WTC11 (cell line): ENCODE measurements at regions of chr22 and their contacts with region 1.

Region 1: GRCh38 chr22:30634471-30635233 is 929 bp upstream of the SLC35E4 start:
- DNase-seq: peak; percentile 92
- ATAC-seq: peak; percentile 49
- H3K4me3 Mint-ChIP-seq: peak overlapping the region; percentile 65
- H3K27ac Mint-ChIP-seq: 0 out of 2 replicates have a peak overlapping the region, but pooled peaks have one; percentile 15
- H3K4me1 Mint-ChIP-seq: peaks cover 18% of the 10 kb centered on the region
- H3K27me3 Mint-ChIP-seq: 0 out of 2 replicates have a peak, but pooled peaks cover 7% of the 10 kb centered on the region
- CTCF ChIP-seq: peak; percentile 94

Region 2: GRCh38 chr22:30649430-30650007 is 14.9 kb after region 1 on chr22:
- CTCF ChIA-PET with region 1: interaction called, 35 read pairs
- POLR2A ChIA-PET with region 1: interaction called, 3 read pairs
- DNase-seq: no peak
- ATAC-seq: peak; percentile 46; the same call in 1 of the 2 replicates
- H3K4me3 Mint-ChIP-seq: no peak overlapping the region
- H3K27ac Mint-ChIP-seq: no peak overlapping the region
- H3K4me1 Mint-ChIP-seq: peaks cover 11% of the 10 kb centered on the region
- H3K27me3 Mint-ChIP-seq: peaks cover 4% of the 10 kb centered on the region
- CTCF ChIP-seq: no peak

Region 3: GRCh38 chr22:30667494-30668385 is 33.1 kb after region 1 on chr22 and contains the start of gene DUSP18:
- CTCF ChIA-PET with region 1: interaction called, 32 read pairs
- POLR2A ChIA-PET with region 1: no interaction called
- DNase-seq: peak; percentile 98
- ATAC-seq: peak; percentile 98
- H3K4me3 Mint-ChIP-seq: peak within 1 kb of the TSS; percentile 84
- H3K27ac Mint-ChIP-seq: peak within 1 kb of the TSS; percentile 52; the same call in 1 of the 2 replicates
- H3K4me1 Mint-ChIP-seq: peaks cover 12% of the 10 kb centered on the region
- H3K27me3 Mint-ChIP-seq: peaks cover 36% of the 10 kb centered on the region
- CTCF ChIP-seq: peak; percentile 37; the same call in 1 of the 2 replicates
- total RNA-seq, gene DUSP18: 4.2 to 4.4 TPM (median 4.3 TPM) in 3 replicates

Region 4: DNA sequence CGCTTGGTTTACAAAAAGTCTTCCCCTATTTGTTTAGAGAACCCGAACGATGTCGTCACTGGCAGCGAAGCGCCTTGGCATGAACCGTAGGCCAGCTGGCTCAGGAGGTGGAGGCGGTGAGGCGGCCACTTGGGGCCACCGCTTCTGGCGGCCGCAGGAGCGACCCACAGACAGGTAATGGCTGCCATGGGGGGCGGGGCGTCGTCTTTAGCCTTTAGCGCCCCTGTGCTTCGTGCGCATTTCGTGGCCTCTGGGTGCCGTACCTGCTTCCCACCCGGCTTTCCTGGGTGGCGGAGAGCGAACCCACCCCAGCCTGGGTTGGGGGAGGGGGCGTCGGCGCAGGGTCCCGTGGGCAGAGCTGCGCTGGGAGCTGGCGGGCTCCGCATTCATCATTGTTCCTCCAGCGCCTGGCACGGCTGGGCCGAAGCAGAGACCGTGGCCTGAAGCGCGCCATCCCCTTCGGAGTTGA is 59.6 kb after region 1 on chr22:
- CTCF ChIA-PET with region 1: interaction called, 25 read pairs
- POLR2A ChIA-PET with region 1: interaction called, 4 read pairs
- DNase-seq: peak; percentile 66
- ATAC-seq: peak; percentile 70
- H3K4me3 Mint-ChIP-seq: peak overlapping the region; percentile 79
- H3K27ac Mint-ChIP-seq: 0 out of 2 replicates have a peak overlapping the region, but pooled peaks have one; percentile 62
- H3K4me1 Mint-ChIP-seq: peaks cover 16% of the 10 kb centered on the region
- H3K27me3 Mint-ChIP-seq: peaks cover 27% of the 10 kb centered on the region
- CTCF ChIP-seq: no peak

Region 5: DNA sequence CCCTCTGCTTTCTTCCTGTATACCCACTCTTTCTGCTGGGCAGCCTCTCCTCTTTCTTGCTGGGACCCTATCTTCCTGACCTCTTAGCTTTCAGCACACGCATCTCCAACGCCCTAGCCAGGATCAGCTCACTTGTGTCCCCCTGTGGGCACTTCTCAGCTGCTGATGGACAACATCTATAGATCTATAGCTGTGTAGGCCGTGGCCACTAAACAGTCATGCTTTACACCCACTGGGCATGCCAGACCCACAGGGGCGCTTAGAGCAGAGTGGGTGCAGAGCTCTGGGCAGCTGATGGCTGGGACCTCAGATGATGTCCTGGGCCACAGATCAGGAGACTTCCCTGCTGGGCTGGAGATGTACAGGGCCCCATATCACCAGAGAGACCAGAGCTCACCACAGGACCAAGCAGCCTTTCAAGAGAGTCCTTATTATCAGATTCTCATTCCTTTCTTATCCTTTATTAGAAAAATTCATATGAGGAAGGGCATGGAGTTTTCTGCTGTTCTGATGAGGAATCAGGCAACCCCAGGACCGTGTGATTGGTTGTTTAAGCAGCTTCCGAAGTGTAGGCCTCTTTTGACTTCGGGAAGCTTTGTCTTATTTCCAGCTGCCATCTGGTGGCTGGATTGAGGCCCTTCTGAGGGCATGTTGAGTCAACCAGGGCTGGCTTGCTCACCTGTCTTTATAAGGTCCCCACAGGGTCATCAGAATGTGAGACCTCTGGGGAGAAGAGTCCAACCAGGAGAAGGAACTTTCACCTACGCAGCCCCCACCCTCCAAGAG is 120.5 kb after region 1 on chr22:
- CTCF ChIA-PET with region 1: interaction called, 166 read pairs
- POLR2A ChIA-PET with region 1: interaction called, 8 read pairs
- DNase-seq: peak; percentile 66
- ATAC-seq: peak; percentile 93
- H3K4me3 Mint-ChIP-seq: no peak overlapping the region
- H3K27ac Mint-ChIP-seq: no peak overlapping the region
- H3K4me1 Mint-ChIP-seq: peaks cover 11% of the 10 kb centered on the region
- H3K27me3 Mint-ChIP-seq: no peaks in the 10 kb centered on the region
- CTCF ChIP-seq: peak; percentile 32; the same call in 1 of the 2 replicates

Region 6: DNA sequence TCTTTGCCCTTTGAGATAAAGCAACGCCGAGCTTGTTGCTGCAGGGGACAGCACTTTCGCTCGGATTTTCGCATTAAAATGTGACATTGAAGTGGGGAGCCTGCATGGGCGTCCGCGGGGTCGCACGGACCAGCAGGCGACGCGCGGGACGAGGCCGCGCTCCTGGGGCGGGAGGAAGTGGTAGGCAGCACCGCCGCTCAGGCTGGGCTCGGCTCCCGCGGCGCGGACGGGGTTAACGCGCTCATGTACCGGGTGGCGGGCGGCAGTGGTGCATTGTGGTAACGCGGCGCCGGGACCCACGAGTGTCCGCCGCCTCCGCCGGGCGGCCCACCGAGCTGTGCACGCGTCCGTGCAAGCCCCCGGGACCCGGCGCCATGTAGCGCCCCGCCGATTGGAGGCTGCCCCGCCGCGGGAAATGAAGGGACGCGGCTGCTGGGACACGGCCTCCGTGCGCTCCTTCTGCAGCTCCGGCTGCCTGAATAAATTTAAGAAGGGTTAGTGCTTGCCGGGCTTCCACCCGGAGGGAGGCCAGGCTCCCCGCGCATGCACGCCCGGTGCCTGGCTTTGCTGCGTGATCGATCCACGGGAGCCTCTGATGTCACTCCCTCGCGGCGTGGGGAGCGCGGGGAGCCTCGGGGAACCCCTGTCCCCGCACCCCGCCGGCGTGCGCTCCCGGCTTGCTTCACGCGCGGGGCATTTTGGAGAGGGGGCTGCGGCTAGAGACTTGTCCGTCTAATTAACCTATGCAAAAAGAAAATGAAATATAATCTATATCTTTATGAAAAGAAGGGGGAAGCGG is 187.8 kb after region 1 on chr22:
- CTCF ChIA-PET with region 1: interaction called, 14 read pairs
- POLR2A ChIA-PET with region 1: no interaction called
- DNase-seq: peak; percentile 46
- ATAC-seq: peak; percentile 50
- H3K4me3 Mint-ChIP-seq: peak overlapping the region; percentile 65
- H3K27ac Mint-ChIP-seq: no peak overlapping the region
- H3K4me1 Mint-ChIP-seq: peaks cover 14% of the 10 kb centered on the region
- H3K27me3 Mint-ChIP-seq: peaks cover 37% of the 10 kb centered on the region
- CTCF ChIP-seq: no peak